ENCODE measurements at regions of chr16 and their contacts with region 1.

Region 1: DNA sequence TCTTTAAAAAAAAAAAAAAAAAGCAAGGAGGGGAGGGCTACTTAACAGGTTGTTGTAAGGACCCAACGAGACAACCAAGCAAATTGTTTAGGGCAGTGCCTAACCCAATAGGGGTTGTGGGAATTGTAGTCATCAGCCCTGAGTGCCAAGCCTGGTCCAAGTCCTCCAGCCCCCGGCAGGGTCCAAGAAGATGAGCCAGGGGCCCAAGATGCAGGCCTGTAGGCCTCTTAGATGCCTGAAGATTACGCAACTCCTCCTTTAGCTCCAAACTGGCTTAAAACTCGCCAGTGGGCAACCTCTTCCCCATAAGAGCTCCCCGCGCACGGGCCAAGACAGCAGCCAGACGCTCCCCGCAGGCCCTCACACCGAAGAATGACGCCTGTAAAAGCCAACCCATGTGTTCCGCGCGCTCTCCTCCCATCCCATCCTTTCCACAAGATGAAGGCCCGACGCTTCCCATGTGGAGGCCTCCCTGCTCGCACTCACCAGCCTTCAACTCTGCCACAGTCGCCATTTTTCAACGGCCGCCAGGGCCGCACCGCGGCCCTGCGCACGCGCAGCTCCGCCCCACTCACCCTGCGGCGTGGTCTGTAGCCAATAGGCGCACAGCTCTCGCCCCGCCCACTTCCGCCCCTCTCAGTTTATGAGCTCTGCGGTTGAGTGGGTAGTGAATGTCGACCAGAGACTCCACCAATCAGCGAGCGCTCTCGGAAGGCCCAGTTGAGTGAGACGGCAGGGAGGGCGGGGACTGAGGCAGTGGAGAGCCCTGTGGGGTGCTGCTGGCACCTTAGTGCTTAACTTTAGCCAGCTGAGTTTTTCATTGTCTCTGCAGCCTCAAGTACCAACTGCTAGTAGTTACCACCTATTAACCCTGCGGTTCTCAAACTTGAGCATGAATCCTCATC is at the start of gene CEP20:
- DNase-seq: peak; percentile 100
- ATAC-seq: peak; percentile 98
- H3K4me3 ChIP-seq: peak within 1 kb of the TSS; percentile 86
- H3K27ac ChIP-seq: peak within 1 kb of the TSS; percentile 95
- H3K4me1 ChIP-seq: peaks cover 14 to 28% of the 10 kb centered on the region in 2 experiments
- H3K27me3 ChIP-seq: no peaks in the 10 kb centered on the region
- CTCF ChIP-seq: no peak
- EP300 ChIP-seq: peak; percentile 13; the same call in 1 of the 2 replicates
- POLR2A ChIP-seq: peak; percentile 94
- RAD21 ChIP-seq: no peak
- polyA plus RNA-seq, gene CEP20: 107 to 150 TPM

Region 2: GRCh38 chr16:15899538-15900100 is 11.3 kb after region 1 on chr16:
- CTCF ChIA-PET with region 1: no interaction called
- POLR2A ChIA-PET with region 1: interaction called, 16 read pairs
- in situ Hi-C with region 1: no loop called
- intact Hi-C with region 1: no loop called
- DNase-seq: peak; percentile 61 to 75 (median 62)
- ATAC-seq: peak; percentile 89
- H3K4me3 ChIP-seq: no peak overlapping the region
- H3K27ac ChIP-seq: peak overlapping the region; percentile 8; the same call in 1 of the 3 replicates
- H3K4me1 ChIP-seq: peaks cover 16 to 26% of the 10 kb centered on the region in 2 experiments
- H3K27me3 ChIP-seq: no peaks in the 10 kb centered on the region
- CTCF ChIP-seq: no peak
- EP300 ChIP-seq: no peak
- POLR2A ChIP-seq: no peak
- RAD21 ChIP-seq: no peak

Region 3: DNA sequence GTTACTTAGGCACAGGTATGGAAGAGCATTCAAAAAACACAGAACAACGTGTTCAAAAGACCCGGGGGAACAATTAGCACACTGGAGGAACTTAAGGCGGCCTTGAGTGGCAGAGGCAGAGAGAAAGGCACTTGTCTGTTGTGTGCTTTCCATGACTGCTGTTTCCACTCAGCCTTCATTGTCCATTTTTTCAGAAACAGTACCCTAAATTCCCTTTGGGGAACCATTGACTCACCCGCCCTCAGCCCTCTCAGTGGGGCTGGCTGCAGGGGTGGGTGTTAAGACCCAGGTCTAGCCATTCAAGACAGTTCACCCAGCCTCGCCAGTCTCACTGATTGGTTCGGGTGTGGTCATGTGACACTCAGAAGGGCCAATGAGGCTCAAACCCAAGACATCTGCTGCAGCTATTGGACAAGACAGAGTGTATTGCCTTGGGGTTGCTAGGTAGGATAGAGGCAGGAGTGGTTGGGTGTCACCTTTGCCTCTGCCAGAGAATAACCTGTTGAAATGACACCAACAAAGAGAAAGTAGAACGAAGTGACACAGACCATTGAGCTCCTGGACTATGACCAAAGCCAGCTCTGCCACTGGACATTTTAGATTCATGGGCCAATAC is 19.6 kb after region 1 on chr16:
- CTCF ChIA-PET with region 1: no interaction called
- POLR2A ChIA-PET with region 1: interaction called, 12 read pairs
- in situ Hi-C with region 1: no loop called
- intact Hi-C with region 1: no loop called
- DNase-seq: peak; percentile 85 to 94 (median 90)
- ATAC-seq: peak; percentile 100
- H3K4me3 ChIP-seq: no peak overlapping the region
- H3K27ac ChIP-seq: no peak overlapping the region
- H3K4me1 ChIP-seq: no peaks in the 10 kb centered on the region; a peak in 1 of 5 replicates
- H3K27me3 ChIP-seq: no peaks in the 10 kb centered on the region
- CTCF ChIP-seq: no peak
- EP300 ChIP-seq: no peak
- POLR2A ChIP-seq: no peak
- RAD21 ChIP-seq: no peak

Region 4: DNA sequence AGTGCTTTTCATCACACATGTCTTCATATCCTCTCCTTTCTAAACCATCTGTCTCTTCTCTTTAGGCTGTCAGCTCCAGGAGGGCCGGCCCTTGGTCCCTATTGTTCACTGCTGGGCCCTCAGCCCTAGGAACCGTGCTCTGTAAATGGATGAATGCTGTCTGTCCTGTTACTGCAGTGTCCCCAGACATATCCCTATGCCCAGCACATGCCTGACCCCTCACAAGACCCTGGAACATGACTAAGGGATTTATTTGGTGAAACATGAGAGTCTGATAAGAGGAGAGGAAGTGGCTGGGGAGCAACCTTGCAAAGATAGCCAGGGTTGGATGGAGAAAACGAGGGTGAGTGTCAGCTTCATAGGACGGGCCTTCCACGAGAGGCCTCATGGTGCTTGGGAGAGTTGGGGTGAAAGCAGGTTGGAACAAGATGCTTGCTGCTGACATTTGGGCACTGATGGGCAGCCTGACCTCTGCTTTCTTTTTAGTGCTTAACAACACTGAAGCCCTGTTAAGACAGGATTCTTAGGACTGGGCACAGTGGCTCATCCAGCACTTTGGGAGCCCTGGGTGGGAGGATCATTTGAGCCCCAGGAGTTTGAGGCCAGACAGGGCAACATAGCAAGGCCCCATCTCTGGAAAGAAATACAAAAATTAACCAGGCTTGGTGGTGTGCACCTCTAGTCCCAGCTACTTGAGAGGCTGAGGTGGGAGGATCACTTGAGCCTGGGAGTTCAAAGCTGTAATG is 100.1 kb after region 1 on chr16:
- CTCF ChIA-PET with region 1: no interaction called
- POLR2A ChIA-PET with region 1: no interaction called
- in situ Hi-C with region 1: no loop called
- intact Hi-C with region 1: loop called (anchors 5 kb)
- DNase-seq: peak; percentile 66 to 94 (median 78)
- ATAC-seq: peak; percentile 86
- H3K4me3 ChIP-seq: no peak overlapping the region
- H3K27ac ChIP-seq: peak overlapping the region; percentile 90
- H3K4me1 ChIP-seq: peaks cover 39 to 43% of the 10 kb centered on the region in 2 experiments
- H3K27me3 ChIP-seq: no peaks in the 10 kb centered on the region
- CTCF ChIP-seq: no peak
- EP300 ChIP-seq: peak; percentile 91
- POLR2A ChIP-seq: peak; percentile 52; the same call in 1 of the 2 replicates
- RAD21 ChIP-seq: no peak

Measured in K562 (cell line).